ENCODE measurements at regions of chr17 and their contacts with region 1.

Region 1: GRCh38 chr17:17297217-17297616 is 6.0 kb upstream of the NT5M start:
- DNase-seq: no peak
- H3K4me3 ChIP-seq: no peak overlapping the region
- H3K27ac ChIP-seq: no peak overlapping the region
- H3K4me1 ChIP-seq: peaks cover 14% of the 10 kb centered on the region
- H3K27me3 ChIP-seq: no peaks in the 10 kb centered on the region
- CTCF ChIP-seq: no peak

Region 2: GRCh38 chr17:17280613-17281549 is 16.3 kb before region 1 on chr17 and contains the start of gene COPS3:
- CTCF ChIA-PET with region 1: no interaction called
- dilution Hi-C with region 1: no loop called
- in situ Hi-C with region 1: no loop called
- intact Hi-C with region 1: loop called (anchors 2 kb)
- DNase-seq: peak; percentile 95
- H3K4me3 ChIP-seq: peak within 1 kb of the TSS; percentile 92 to 98 (median 96)
- H3K27ac ChIP-seq: peak within 1 kb of the TSS; percentile 95
- H3K4me1 ChIP-seq: peaks cover 15% of the 10 kb centered on the region
- H3K27me3 ChIP-seq: no peaks in the 10 kb centered on the region
- CTCF ChIP-seq: peak in 1 of 2 donors; percentile 4
- total RNA-seq, gene COPS3: 69.5 to 74.2 TPM

Measured in mammary epithelial cell (primary cell).